ENCODE measurements at regions of chr1 and their contacts with region 1.

Region 1: GRCh38 chr1:235225299-235225698 is 64.2 kb upstream of the RBM34 start:
- DNase-seq: no peak
- H3K4me3 ChIP-seq: no peak overlapping the region
- H3K27ac ChIP-seq: no peak overlapping the region
- H3K27me3 ChIP-seq: no peaks in the 10 kb centered on the region
- CTCF ChIP-seq: no peak

Region 2: GRCh38 chr1:234918181-234918841 is 307.0 kb before region 1 on chr1:
- CTCF ChIA-PET with region 1: no interaction called
- POLR2A ChIA-PET with region 1: no interaction called
- DNase-seq: no peak
- H3K4me3 ChIP-seq: no peak overlapping the region
- H3K27ac ChIP-seq: no peak overlapping the region
- H3K27me3 ChIP-seq: no peaks in the 10 kb centered on the region
- CTCF ChIP-seq: no peak

Region 3: GRCh38 chr1:235203428-235203827 is 21.9 kb before region 1 on chr1:
- CTCF ChIA-PET with region 1: no interaction called
- POLR2A ChIA-PET with region 1: no interaction called
- DNase-seq: no peak
- H3K4me3 ChIP-seq: no peak overlapping the region
- H3K27ac ChIP-seq: no peak overlapping the region
- H3K27me3 ChIP-seq: no peaks in the 10 kb centered on the region
- CTCF ChIP-seq: no peak

Region 4: DNA sequence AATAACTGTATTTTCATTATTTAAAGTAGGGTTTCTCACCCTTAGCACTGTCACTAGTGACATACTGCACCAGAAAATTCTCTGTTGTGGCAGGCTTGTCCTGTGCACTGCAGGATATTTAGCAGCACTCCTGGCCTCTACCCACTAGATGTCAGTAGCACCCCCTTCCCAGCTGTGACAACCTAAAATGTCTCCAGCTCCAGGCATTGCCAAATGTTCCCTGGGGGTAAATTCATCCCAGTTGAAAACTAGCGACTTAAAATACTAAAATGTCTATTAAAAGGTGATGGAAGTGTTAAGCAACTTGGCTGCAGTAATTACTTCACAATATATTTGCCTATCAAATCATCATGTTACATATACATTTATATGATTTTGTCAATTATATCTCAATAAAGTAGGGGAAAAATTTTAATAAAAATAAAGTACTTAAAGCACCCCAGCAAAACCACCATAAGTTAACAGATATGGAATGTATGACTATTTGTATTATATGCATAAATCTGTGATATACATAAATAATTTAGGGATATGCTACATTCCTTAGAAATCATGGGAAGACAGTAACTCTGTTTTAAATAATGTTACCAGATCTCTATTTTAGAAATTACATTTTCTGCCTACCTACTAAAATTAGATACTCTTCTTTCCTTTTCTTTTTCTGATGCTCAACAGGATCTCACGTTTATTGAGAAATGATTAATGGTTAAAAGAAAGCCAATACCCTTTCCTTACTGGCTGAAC is 28.1 kb after region 1 on chr1:
- CTCF ChIA-PET with region 1: interaction called, 13 read pairs
- POLR2A ChIA-PET with region 1: no interaction called
- DNase-seq: peak; percentile 41
- H3K4me3 ChIP-seq: no peak overlapping the region
- H3K27ac ChIP-seq: no peak overlapping the region
- H3K27me3 ChIP-seq: no peaks in the 10 kb centered on the region
- CTCF ChIP-seq: peak; percentile 96

Region 5: GRCh38 chr1:235259133-235259778 is 34.0 kb after region 1 on chr1:
- CTCF ChIA-PET with region 1: interaction called, 10 read pairs
- POLR2A ChIA-PET with region 1: no interaction called
- DNase-seq: no peak
- H3K4me3 ChIP-seq: no peak overlapping the region
- H3K27ac ChIP-seq: no peak overlapping the region
- H3K27me3 ChIP-seq: no peaks in the 10 kb centered on the region
- CTCF ChIP-seq: no peak

Region 6: GRCh38 chr1:235468970-235469369 is 243.7 kb after region 1 on chr1:
- CTCF ChIA-PET with region 1: interaction called, 12 read pairs
- POLR2A ChIA-PET with region 1: no interaction called
- DNase-seq: peak; percentile 8
- H3K4me3 ChIP-seq: no peak overlapping the region
- H3K27ac ChIP-seq: no peak overlapping the region
- H3K27me3 ChIP-seq: no peaks in the 10 kb centered on the region
- CTCF ChIP-seq: peak; percentile 26; the same call in 1 of the 2 replicates